Dendritic cell treated with granulocyte-macrophage colony-stimulating factor and Interleukin-4, amounts not matched to agents 40 ng/mL and 50 ng/mL, for 4 days (primary cell): ENCODE measurements at regions of chr19 and their contacts with region 1.

Region 1: DNA sequence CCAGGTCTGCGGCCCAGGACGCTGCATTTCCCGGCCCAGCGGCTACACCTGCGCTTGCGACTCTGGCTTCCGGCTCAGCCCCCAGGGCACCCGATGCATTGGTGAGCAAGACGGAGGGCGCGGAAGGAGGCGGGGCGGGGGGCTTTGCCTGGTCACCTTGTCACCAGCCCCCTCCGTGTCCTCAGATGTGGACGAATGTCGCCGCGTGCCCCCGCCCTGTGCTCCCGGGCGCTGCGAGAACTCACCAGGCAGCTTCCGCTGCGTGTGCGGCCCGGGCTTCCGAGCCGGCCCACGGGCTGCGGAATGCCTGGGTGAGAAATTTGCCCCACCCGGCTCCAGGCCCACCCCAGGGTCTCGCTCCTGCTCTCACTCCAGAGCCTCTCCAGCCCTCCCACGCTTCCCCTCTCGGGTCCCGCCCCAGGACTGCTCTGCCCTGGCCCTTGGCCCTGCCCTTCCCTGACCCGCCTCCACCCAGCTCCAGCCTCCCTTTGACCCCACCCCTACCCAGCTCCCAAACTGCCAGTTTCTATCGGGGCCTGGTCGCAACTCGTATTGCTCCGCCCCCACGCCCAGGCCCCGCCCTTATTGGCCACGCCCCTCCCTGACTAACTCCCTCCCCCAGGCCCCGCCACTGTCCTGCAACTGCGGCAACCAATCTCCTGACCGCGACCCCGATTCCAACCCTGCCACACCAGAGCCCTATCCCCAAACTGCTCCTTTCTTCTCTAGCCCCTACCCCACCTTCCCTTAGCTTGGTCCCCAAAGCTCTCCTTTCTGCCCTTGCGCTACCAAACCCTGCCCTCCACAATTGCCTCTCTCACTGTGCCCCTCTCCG is 8.6 kb downstream of the LTBP4 start:
- H3K4me3 Mint-ChIP-seq: peak overlapping the region; percentile 67
- H3K27ac Mint-ChIP-seq: peak overlapping the region; percentile 73
- H3K4me1 Mint-ChIP-seq: peaks cover 89% of the 10 kb centered on the region
- H3K27me3 Mint-ChIP-seq: peaks cover 77% of the 10 kb centered on the region

Region 2: GRCh38 chr19:40570313-40571004 is 39.3 kb before region 1 on chr19:
- intact Hi-C with region 1: loop called (anchors 5 kb)
- H3K4me3 Mint-ChIP-seq: peak overlapping the region; percentile 68
- H3K27ac Mint-ChIP-seq: peak overlapping the region; percentile 47
- H3K4me1 Mint-ChIP-seq: peaks cover 35% of the 10 kb centered on the region
- H3K27me3 Mint-ChIP-seq: peaks cover 42% of the 10 kb centered on the region